ENCODE measurements at regions of chr16 and their contacts with region 1.

Region 1: DNA sequence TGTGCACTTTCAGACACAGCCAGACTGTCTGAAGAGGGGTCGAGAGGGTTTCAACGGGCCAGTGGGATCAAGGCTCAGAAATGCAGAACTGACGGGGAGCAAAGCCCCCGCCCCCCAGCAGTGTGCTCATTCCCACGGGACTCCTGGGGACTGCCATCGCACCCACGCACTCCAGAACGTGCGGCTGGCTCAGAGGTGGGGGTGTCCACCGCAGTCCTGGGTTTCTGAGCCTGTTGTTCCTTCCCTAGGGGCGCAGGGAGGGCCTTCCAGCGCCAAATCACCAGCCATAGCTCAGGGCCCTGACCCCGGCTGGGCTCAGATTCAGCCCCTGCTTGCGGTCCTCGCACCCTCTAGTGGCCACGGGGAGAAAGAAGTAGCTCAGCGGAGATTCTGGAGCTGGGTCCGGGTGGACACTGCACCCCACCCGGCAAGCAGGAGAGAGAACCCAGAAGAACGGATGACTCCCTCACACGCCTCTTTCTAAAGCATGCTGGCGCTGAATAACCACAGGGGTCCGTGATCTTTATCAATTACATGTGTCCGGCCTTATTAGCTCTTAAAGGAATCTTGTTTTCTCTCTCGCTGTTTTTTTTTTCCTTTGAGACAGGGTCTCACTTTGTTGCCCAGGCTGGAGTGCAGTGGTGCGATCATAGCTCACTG is 45.0 kb upstream of the USP7 start:
- DNase-seq: no peak
- ATAC-seq: peak; percentile 99
- H3K4me3 ChIP-seq: 0 out of 4 replicates have a peak overlapping the region, but pooled peaks of 1 of the 2 experiments have one; percentile 27
- H3K27ac ChIP-seq: no peak overlapping the region
- H3K4me1 ChIP-seq: peaks cover 4 to 9% of the 10 kb centered on the region in 2 experiments; a peak in 3 of 4 replicates
- H3K27me3 ChIP-seq: no peaks in the 10 kb centered on the region
- CTCF ChIP-seq: peak; percentile 75 to 87 (median 86)
- POLR2A ChIP-seq: no peak
- RAD21 ChIP-seq: peak; percentile 86

Region 2: GRCh38 chr16:8567750-8568617 is 440.7 kb before region 1 on chr16:
- CTCF ChIA-PET with region 1: interaction called, 3 read pairs
- POLR2A ChIA-PET with region 1: no interaction called
- RAD21 ChIA-PET with region 1: no interaction called
- intact Hi-C with region 1: loop called (anchors 10 kb)
- DNase-seq: peak; percentile 94
- ATAC-seq: peak; percentile 89
- H3K4me3 ChIP-seq: no peak overlapping the region
- H3K27ac ChIP-seq: no peak overlapping the region
- H3K4me1 ChIP-seq: peaks cover 0 to 4% of the 10 kb centered on the region in 2 experiments; a peak in 1 of 4 replicates
- H3K27me3 ChIP-seq: no peaks in the 10 kb centered on the region
- CTCF ChIP-seq: peak; percentile 98 to 99 (median 99)
- POLR2A ChIP-seq: no peak
- RAD21 ChIP-seq: peak; percentile 99

Region 3: DNA sequence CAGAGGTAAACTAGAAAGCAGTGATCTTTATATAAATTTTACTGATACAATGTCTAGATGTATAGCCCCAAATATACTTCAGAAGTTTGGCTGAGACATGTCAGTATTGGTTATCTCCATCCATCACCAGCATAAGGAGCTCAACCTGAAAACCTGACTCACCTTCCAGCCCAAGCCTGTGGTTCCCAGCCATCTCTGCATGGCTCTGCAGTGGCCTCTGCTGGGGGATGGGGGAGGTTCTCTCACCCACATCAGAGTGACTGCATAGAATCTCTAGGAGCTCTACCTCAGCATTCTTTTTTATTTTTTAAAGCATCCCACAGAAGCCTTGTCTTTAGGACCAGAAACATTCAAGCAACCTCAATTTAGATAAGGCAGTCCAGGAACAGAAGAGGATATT is 72.3 kb before region 1 on chr16:
- CTCF ChIA-PET with region 1: interaction called, 27 read pairs
- POLR2A ChIA-PET with region 1: no interaction called
- RAD21 ChIA-PET with region 1: interaction called, 4 to 9 read pairs
- intact Hi-C with region 1: loop called (anchors 2 kb)
- DNase-seq: peak; percentile 16
- ATAC-seq: peak; percentile 96
- H3K4me3 ChIP-seq: no peak overlapping the region
- H3K27ac ChIP-seq: no peak overlapping the region
- H3K4me1 ChIP-seq: peaks cover 7 to 19% of the 10 kb centered on the region in 2 experiments
- H3K27me3 ChIP-seq: no peaks in the 10 kb centered on the region
- CTCF ChIP-seq: peak; percentile 19 to 82 (median 64); a peak in 5 of 6 replicates
- POLR2A ChIP-seq: no peak
- RAD21 ChIP-seq: peak; percentile 42

Region 4: GRCh38 chr16:9033125-9033830 is 24.5 kb after region 1 on chr16:
- CTCF ChIA-PET with region 1: interaction called, 18 read pairs
- POLR2A ChIA-PET with region 1: no interaction called
- RAD21 ChIA-PET with region 1: no interaction called
- intact Hi-C with region 1: no loop called
- DNase-seq: peak; percentile 74
- ATAC-seq: peak; percentile 91
- H3K4me3 ChIP-seq: no peak overlapping the region
- H3K27ac ChIP-seq: no peak overlapping the region
- H3K4me1 ChIP-seq: peaks cover 0 to 10% of the 10 kb centered on the region in 2 experiments; a peak in 2 of 4 replicates
- H3K27me3 ChIP-seq: no peaks in the 10 kb centered on the region
- CTCF ChIP-seq: peak in 2 of 3 experiments; percentile 64 to 74; a peak in 4 of 6 replicates
- POLR2A ChIP-seq: no peak
- RAD21 ChIP-seq: peak; percentile 46; the same call in 1 of the 2 replicates

Region 5: DNA sequence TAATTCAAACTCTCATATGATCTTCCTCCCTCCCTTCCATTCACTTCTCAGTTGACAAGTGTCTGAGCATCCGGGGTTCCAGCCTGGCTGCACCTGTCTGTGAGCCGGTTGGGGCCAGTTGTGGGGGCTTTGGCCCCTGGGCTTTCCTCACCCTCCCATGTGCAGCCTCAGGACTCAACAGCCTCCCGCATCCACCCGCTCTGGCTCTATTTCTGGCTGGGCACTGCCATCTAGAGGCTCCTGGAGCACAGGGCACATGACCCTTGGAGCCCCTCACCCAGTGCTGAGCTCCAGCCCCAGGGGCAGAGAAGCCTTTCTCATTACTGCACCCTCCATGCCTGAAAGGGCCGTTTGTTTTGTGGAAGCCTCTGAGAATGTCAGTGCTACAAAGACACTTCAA is 126.0 kb after region 1 on chr16:
- CTCF ChIA-PET with region 1: interaction called, 12 read pairs
- POLR2A ChIA-PET with region 1: no interaction called
- RAD21 ChIA-PET with region 1: interaction called in 1 of 2 experiments, 3 read pairs
- intact Hi-C with region 1: no loop called
- DNase-seq: peak; percentile 29
- ATAC-seq: peak; percentile 82
- H3K4me3 ChIP-seq: no peak overlapping the region
- H3K27ac ChIP-seq: no peak overlapping the region
- H3K4me1 ChIP-seq: peaks cover 0 to 19% of the 10 kb centered on the region in 2 experiments; a peak in 2 of 4 replicates
- H3K27me3 ChIP-seq: peaks cover 9% of the 10 kb centered on the region; the same call in 1 of the 2 replicates
- CTCF ChIP-seq: peak; percentile 74 to 81 (median 77)
- POLR2A ChIP-seq: no peak
- RAD21 ChIP-seq: peak; percentile 92